B cell (primary cell): ENCODE measurements at regions of chr19 and their contacts with region 1.

Region 1: DNA sequence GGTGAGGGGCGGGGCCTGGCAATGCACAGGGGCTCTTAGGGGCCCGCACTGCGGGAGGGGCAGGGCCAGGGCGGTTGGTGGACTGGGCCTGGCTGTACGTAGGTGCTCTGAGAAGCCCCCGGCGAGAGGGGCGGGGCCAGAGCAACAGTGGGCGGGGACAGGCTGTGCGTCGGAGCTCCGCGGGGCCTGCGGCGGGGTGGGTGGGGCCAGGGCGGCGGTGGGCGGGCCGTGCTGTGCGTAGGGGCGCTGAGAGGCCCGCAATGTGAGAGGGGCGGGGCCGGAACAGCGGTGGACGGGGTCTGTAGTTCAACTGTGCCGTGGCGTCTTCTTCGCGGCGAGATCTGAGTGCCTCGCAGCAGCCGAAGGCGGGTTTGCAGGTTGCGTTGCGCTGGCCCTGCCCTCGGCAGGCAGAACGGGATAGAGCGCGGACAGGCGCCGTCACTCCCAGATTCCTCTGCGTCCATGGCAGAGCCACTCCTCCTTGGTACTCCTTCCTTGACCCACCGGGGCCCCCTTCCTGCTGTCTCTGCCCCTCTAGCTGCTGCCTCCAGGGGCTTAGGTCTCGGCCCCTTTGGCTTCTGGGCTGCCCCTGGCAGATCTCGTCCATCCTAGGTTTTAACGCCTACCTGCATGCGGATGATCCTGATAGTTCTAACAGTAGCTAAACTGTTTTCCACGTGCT is 33.2 kb downstream of the CCNE1 start:
- DNase-seq: peak; percentile 96
- ATAC-seq: peak; percentile 78
- H3K4me3 ChIP-seq: peak overlapping the region; percentile 60 to 79 (median 71)
- H3K4me3 Mint-ChIP-seq: peak overlapping the region; percentile 97
- H3K27ac ChIP-seq: peak overlapping the region; percentile 48 to 68
- H3K27ac Mint-ChIP-seq: peak overlapping the region; percentile 96
- H3K4me1 ChIP-seq: peaks cover 21 to 28% of the 10 kb centered on the region in 2 donors
- H3K4me1 Mint-ChIP-seq: peaks cover 17% of the 10 kb centered on the region
- H3K27me3 ChIP-seq: peaks cover 0 to 26% (median 9%) of the 10 kb centered on the region in 4 experiments
- H3K27me3 Mint-ChIP-seq: peaks cover 23% of the 10 kb centered on the region
- CTCF ChIP-seq: no peak

Region 2: DNA sequence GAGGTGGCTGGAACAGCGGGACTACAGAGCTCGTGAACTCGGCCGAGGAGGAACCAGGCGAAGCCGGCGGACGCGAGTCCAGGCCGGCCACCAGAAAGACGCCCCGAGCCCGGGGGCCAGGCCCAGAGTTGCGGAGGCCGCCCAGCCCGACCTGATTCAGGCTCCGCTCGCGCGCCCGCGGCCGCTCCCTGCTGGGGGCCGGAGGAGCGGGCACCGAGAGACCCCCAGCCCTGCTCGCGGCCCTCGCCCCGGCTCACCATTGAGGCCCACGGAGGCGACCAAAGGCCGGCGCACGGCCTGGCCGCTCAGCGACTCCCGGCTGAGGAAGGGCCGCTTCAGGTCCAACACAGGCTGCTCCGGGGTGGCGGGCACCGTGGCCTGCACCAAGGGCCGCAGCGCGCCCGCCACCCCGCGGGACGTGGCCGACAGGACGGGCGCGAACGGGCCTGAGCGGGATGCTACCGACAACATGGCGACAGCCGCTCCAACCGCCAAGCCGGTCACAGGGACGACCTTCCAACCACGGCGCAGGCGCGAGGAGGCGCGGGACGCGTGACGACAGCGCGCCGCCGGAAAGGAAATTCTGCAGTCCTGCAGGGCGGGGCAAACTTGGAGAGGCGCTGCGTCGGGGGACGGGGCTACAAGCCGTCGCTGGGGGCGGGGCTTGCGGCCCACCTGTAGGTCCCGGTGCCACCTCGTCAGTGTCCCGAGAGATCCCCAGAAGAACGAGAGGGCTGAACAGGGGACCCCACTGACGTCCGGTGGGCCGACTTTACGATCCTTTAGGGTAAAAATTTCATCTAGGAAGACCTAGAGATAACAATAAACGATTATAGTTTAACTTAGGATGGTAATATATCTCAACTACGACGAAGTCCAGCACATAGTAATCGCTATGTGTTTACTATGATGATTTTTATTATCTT is 632.1 kb before region 1 on chr19 and contains the start of gene UQCRFS1:
- CTCF ChIA-PET with region 1: no interaction called
- POLR2A ChIA-PET with region 1: no interaction called
- intact Hi-C with region 1: loop called (anchors 2 kb)
- DNase-seq: peak; percentile 95
- ATAC-seq: peak; percentile 98
- H3K4me3 ChIP-seq: peak within 1 kb of the TSS; percentile 68 to 98 (median 83)
- H3K4me3 Mint-ChIP-seq: peak within 1 kb of the TSS; percentile 96
- H3K27ac ChIP-seq: peak within 1 kb of the TSS; percentile 62 to 92
- H3K27ac Mint-ChIP-seq: peak within 1 kb of the TSS; percentile 90
- H3K4me1 ChIP-seq: peaks cover 15 to 17% of the 10 kb centered on the region in 2 donors
- H3K4me1 Mint-ChIP-seq: peaks cover 36% of the 10 kb centered on the region
- H3K27me3 ChIP-seq: peaks cover 0 to 10% (median 0%) of the 10 kb centered on the region in 4 experiments
- H3K27me3 Mint-ChIP-seq: peaks cover 15% of the 10 kb centered on the region
- CTCF ChIP-seq: no peak
- total RNA-seq, gene UQCRFS1: 15.2 and 15.6 TPM in 2 replicates

Region 3: GRCh38 chr19:29665215-29665825 is 179.7 kb before region 1 on chr19 and contains the start of gene PLEKHF1:
- CTCF ChIA-PET with region 1: interaction called, 4 read pairs
- POLR2A ChIA-PET with region 1: no interaction called
- intact Hi-C with region 1: loop called (anchors 1 kb)
- DNase-seq: peak; percentile 87
- ATAC-seq: peak; percentile 97
- H3K4me3 ChIP-seq: peak within 1 kb of the TSS; percentile 18 to 87 (median 75)
- H3K4me3 Mint-ChIP-seq: peak within 1 kb of the TSS; percentile 87
- H3K27ac ChIP-seq: peak within 1 kb of the TSS; percentile 18 to 79
- H3K27ac Mint-ChIP-seq: peak within 1 kb of the TSS; percentile 80
- H3K4me1 ChIP-seq: peaks cover 31 to 42% of the 10 kb centered on the region in 2 donors
- H3K4me1 Mint-ChIP-seq: peaks cover 32% of the 10 kb centered on the region
- H3K27me3 ChIP-seq: no peaks in the 10 kb centered on the region
- H3K27me3 Mint-ChIP-seq: no peaks in the 10 kb centered on the region
- CTCF ChIP-seq: no peak
- total RNA-seq, gene PLEKHF1: 5.5 and 6.4 TPM in 2 replicates

Region 4: GRCh38 chr19:29811125-29812079 is 33.6 kb before region 1 on chr19 and contains the start of gene CCNE1:
- CTCF ChIA-PET with region 1: no interaction called
- POLR2A ChIA-PET with region 1: interaction called, 4 read pairs
- intact Hi-C with region 1: loop called (anchors 1 kb)
- DNase-seq: peak; percentile 92
- ATAC-seq: peak; percentile 94
- H3K4me3 ChIP-seq: peak within 1 kb of the TSS in 4 of 5 experiments; percentile 42 to 67 (median 58)
- H3K4me3 Mint-ChIP-seq: peak within 1 kb of the TSS; percentile 92
- H3K27ac ChIP-seq: peak within 1 kb of the TSS; percentile 41 to 76
- H3K27ac Mint-ChIP-seq: peak within 1 kb of the TSS; percentile 84
- H3K4me1 ChIP-seq: peaks cover 8 to 25% of the 10 kb centered on the region in 2 donors
- H3K4me1 Mint-ChIP-seq: peaks cover 15% of the 10 kb centered on the region
- H3K27me3 ChIP-seq: peaks cover 0 to 8% (median 0%) of the 10 kb centered on the region in 4 experiments
- H3K27me3 Mint-ChIP-seq: no peaks in the 10 kb centered on the region
- CTCF ChIP-seq: no peak
- total RNA-seq, gene CCNE1: 2.5 and 3.1 TPM in 2 replicates

Region 5: GRCh38 chr19:29873024-29873800 is 28.2 kb after region 1 on chr19:
- CTCF ChIA-PET with region 1: interaction called, 5 read pairs
- POLR2A ChIA-PET with region 1: interaction called, 3 read pairs
- intact Hi-C with region 1: loop called (anchors 2 kb)
- DNase-seq: peak; percentile 83
- ATAC-seq: peak; percentile 88
- H3K4me3 ChIP-seq: peak overlapping the region in 4 of 5 experiments; percentile 31 to 67 (median 54)
- H3K4me3 Mint-ChIP-seq: peak overlapping the region; percentile 84
- H3K27ac ChIP-seq: no peak overlapping the region
- H3K27ac Mint-ChIP-seq: no peak overlapping the region
- H3K4me1 ChIP-seq: peaks cover 17 to 44% of the 10 kb centered on the region in 2 donors
- H3K4me1 Mint-ChIP-seq: peaks cover 13% of the 10 kb centered on the region
- H3K27me3 ChIP-seq: peaks cover 0 to 27% (median 6%) of the 10 kb centered on the region in 4 experiments
- H3K27me3 Mint-ChIP-seq: peaks cover 23% of the 10 kb centered on the region
- CTCF ChIP-seq: peak; percentile 95

Region 6: DNA sequence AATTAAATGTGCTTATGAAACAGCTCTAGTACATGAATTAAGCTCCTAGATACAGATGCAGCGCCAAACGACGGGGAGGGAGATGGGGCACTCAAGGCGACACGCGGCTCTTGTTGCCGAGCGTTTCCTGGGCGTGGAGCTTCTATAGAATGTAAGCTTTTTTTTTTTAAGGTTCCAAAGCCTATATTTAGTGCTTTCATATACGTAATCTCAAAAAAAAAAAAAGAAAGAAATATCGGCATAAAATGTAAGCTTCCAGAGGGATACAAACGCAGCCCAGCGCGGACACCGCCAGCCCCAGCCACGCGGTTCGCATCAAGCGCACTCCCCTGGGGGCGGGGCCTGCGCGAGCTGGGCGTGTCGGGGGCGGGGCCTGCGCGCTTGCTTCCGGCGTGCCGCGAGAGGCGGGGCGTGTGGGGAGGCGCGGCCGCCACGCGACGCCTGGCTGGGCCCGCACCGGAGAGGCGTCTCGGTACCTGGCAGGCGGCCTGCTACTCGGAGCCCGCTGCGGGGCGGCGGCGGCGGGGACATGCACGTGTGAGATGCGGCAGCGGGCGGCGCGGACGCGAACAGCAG is 96.9 kb after region 1 on chr19 and contains the start of gene URI1:
- CTCF ChIA-PET with region 1: no interaction called
- POLR2A ChIA-PET with region 1: interaction called, 4 read pairs
- intact Hi-C with region 1: loop called (anchors 1 kb)
- DNase-seq: peak; percentile 92
- ATAC-seq: peak; percentile 92
- H3K4me3 ChIP-seq: peak within 1 kb of the TSS; percentile 59 to 96 (median 78)
- H3K4me3 Mint-ChIP-seq: peak within 1 kb of the TSS; percentile 97
- H3K27ac ChIP-seq: peak within 1 kb of the TSS; percentile 46 to 67
- H3K27ac Mint-ChIP-seq: peak within 1 kb of the TSS; percentile 94
- H3K4me1 ChIP-seq: peaks cover 19 to 30% of the 10 kb centered on the region in 2 donors
- H3K4me1 Mint-ChIP-seq: peaks cover 38% of the 10 kb centered on the region
- H3K27me3 ChIP-seq: peaks cover 0 to 3% (median 0%) of the 10 kb centered on the region in 4 experiments
- H3K27me3 Mint-ChIP-seq: peaks cover 9% of the 10 kb centered on the region
- CTCF ChIP-seq: no peak
- total RNA-seq, gene URI1: 54.2 and 58.0 TPM in 2 replicates